ENCODE measurements at regions of chr17 and their contacts with region 1.

Region 1: GRCh38 chr17:8941520-8941919 is 24.0 kb downstream of the PIK3R5 start:
- DNase-seq: peak; percentile 67 to 81
- ATAC-seq: peak; percentile 51 to 75 (median 74)
- H3K4me3 ChIP-seq: no peak overlapping the region
- H3K4me3 Mint-ChIP-seq: peak overlapping the region; percentile 91
- H3K27ac ChIP-seq: peak overlapping the region; percentile 78
- H3K27ac Mint-ChIP-seq: peak overlapping the region in 1 of 2 donors; percentile 98
- H3K4me1 ChIP-seq: peaks cover 71% of the 10 kb centered on the region
- H3K4me1 Mint-ChIP-seq: peaks cover 91 to 94% of the 10 kb centered on the region in 2 donors
- H3K27me3 ChIP-seq: no peaks in the 10 kb centered on the region
- H3K27me3 Mint-ChIP-seq: no peaks in the 10 kb centered on the region
- CTCF ChIP-seq: no peak

Region 2: GRCh38 chr17:8894673-8895578 is 46.6 kb before region 1 on chr17:
- intact Hi-C with region 1: loop called (anchors 5 kb)
- DNase-seq: peak in 1 of 2 donors; percentile 81
- ATAC-seq: peak; percentile 35 to 57 (median 56)
- H3K4me3 ChIP-seq: no peak overlapping the region
- H3K4me3 Mint-ChIP-seq: no peak overlapping the region
- H3K27ac ChIP-seq: no peak overlapping the region
- H3K27ac Mint-ChIP-seq: peak overlapping the region; percentile 80 to 94
- H3K4me1 ChIP-seq: peaks cover 51% of the 10 kb centered on the region
- H3K4me1 Mint-ChIP-seq: peaks cover 56 to 63% of the 10 kb centered on the region in 2 donors
- H3K27me3 ChIP-seq: no peaks in the 10 kb centered on the region
- H3K27me3 Mint-ChIP-seq: no peaks in the 10 kb centered on the region
- CTCF ChIP-seq: peak; percentile 67

Region 3: DNA sequence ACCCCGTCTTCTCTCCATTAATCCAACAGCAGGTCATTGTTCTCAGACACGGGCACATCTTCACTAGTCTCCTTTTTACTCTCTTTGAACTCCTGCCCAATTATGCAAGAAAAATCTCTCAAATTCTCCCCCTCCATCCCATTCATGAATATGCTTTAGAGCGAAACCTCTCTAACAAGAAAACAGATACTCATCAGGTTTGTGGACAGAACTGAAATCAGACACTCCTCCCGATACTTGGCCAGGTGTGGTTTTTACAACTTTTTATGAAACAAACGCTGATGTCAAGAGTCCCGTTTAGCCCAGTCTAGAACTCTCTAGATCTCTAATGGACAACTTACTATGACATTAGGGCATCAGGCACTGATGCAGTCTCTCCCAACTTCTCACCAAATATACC is 16.9 kb before region 1 on chr17:
- intact Hi-C with region 1: loop called (anchors 2 kb)
- DNase-seq: no peak
- ATAC-seq: peak; percentile 19 to 40 (median 40)
- H3K4me3 ChIP-seq: no peak overlapping the region
- H3K4me3 Mint-ChIP-seq: no peak overlapping the region
- H3K27ac ChIP-seq: peak overlapping the region; percentile 39
- H3K27ac Mint-ChIP-seq: no peak overlapping the region
- H3K4me1 ChIP-seq: peaks cover 44% of the 10 kb centered on the region
- H3K4me1 Mint-ChIP-seq: peaks cover 27 to 43% of the 10 kb centered on the region in 2 donors
- H3K27me3 ChIP-seq: no peaks in the 10 kb centered on the region
- H3K27me3 Mint-ChIP-seq: no peaks in the 10 kb centered on the region
- CTCF ChIP-seq: no peak

Region 4: DNA sequence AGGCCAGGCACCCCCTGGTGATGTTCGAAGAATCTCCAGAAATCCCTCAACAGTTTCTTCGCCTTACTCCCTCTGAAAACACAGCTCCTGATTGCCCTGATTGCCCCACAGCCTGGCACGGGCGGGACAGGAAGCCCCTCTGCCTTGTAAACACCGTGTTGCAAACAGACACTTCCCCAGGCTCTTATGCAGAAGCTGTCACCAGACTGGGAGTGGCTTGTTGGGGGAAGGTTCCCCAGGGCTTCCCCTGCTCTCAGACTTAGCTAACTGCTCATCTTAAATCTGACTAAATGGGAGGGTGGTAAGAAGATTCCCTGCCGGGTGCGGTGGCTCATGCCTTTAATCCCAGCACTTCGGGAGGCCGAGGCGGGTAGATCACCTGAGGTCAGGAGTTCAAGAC is 12.8 kb after region 1 on chr17:
- intact Hi-C with region 1: loop called (anchors 1 kb)
- DNase-seq: peak; percentile 79 to 95
- ATAC-seq: peak; percentile 77 to 95 (median 87)
- H3K4me3 ChIP-seq: no peak overlapping the region
- H3K4me3 Mint-ChIP-seq: peak overlapping the region; percentile 93
- H3K27ac ChIP-seq: peak overlapping the region; percentile 81
- H3K27ac Mint-ChIP-seq: peak overlapping the region in 1 of 2 donors; percentile 89
- H3K4me1 ChIP-seq: peaks cover 76% of the 10 kb centered on the region
- H3K4me1 Mint-ChIP-seq: peaks cover 96 to 98% of the 10 kb centered on the region in 2 donors
- H3K27me3 ChIP-seq: no peaks in the 10 kb centered on the region
- H3K27me3 Mint-ChIP-seq: no peaks in the 10 kb centered on the region
- CTCF ChIP-seq: no peak

Region 5: DNA sequence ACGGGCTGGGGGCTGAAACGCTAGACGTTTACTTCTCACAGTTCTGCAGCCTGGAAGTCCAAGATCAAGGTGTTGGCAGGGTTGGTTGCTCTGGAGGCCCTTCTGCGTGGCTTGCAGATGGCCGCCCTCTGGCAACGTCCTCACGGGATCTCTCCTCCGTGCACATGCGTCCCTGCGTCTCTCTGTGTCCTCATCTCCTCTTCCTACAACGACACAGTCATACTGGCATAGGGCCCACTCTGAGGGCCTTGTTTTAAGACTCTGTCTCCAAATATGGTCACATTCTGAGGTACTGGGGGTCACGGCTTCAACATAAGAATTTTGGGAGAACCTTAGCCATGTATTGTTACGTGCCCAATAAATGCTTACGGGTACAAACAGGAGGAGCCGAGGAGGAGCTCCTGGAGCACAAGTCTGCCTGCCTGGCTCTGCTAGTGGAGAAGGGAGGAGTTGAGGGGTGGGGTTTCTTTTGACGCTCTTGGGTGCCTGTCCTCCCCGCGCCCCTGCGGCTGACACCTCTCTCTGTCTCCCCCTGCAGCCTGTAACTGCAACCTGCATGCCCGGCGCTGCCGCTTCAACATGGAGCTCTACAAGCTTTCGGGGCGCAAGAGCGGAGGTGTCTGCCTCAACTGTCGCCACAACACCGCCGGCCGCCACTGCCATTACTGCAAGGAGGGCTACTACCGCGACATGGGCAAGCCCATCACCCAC is 220.9 kb after region 1 on chr17:
- intact Hi-C with region 1: no loop called
- DNase-seq: no peak
- ATAC-seq: no peak
- H3K4me3 ChIP-seq: no peak overlapping the region
- H3K4me3 Mint-ChIP-seq: no peak overlapping the region
- H3K27ac ChIP-seq: no peak overlapping the region
- H3K27ac Mint-ChIP-seq: no peak overlapping the region
- H3K4me1 ChIP-seq: no peaks in the 10 kb centered on the region
- H3K4me1 Mint-ChIP-seq: no peaks in the 10 kb centered on the region
- H3K27me3 ChIP-seq: no peaks in the 10 kb centered on the region
- H3K27me3 Mint-ChIP-seq: peaks cover 0 to 6% of the 10 kb centered on the region in 2 donors
- CTCF ChIP-seq: no peak